Activated CD8-positive, alpha-beta T cell treated with anti-CD3 and anti-CD28 coated beads, Interleukin-2, amount 10 ng/mL, durations not matched to agents 7 days and 5 days (primary cell): ENCODE measurements at regions of chr5 and their contacts with region 1.

Region 1: GRCh38 chr5:102681407-102681983 is 73.6 kb upstream of the PAM start:
- DNase-seq: peak; percentile 70
- ATAC-seq: peak; percentile 76
- H3K4me3 Mint-ChIP-seq: no peak overlapping the region
- H3K27ac Mint-ChIP-seq: no peak overlapping the region
- H3K4me1 Mint-ChIP-seq: no peaks in the 10 kb centered on the region
- H3K27me3 Mint-ChIP-seq: peaks cover 7% of the 10 kb centered on the region

Region 2: GRCh38 chr5:102638912-102639652 is 42.4 kb before region 1 on chr5:
- CTCF ChIA-PET with region 1: no interaction called
- POLR2A ChIA-PET with region 1: no interaction called
- DNase-seq: no peak
- ATAC-seq: no peak
- H3K4me3 Mint-ChIP-seq: no peak overlapping the region
- H3K27ac Mint-ChIP-seq: no peak overlapping the region
- H3K4me1 Mint-ChIP-seq: no peaks in the 10 kb centered on the region
- H3K27me3 Mint-ChIP-seq: no peaks in the 10 kb centered on the region

Region 3: GRCh38 chr5:102700120-102700831 is 18.8 kb after region 1 on chr5:
- CTCF ChIA-PET with region 1: interaction called, 10 read pairs
- POLR2A ChIA-PET with region 1: no interaction called
- DNase-seq: no peak
- ATAC-seq: no peak
- H3K4me3 Mint-ChIP-seq: no peak overlapping the region
- H3K27ac Mint-ChIP-seq: no peak overlapping the region
- H3K4me1 Mint-ChIP-seq: no peaks in the 10 kb centered on the region
- H3K27me3 Mint-ChIP-seq: no peaks in the 10 kb centered on the region

Region 4: GRCh38 chr5:102971697-102972293 is 290.3 kb after region 1 on chr5:
- CTCF ChIA-PET with region 1: interaction called, 20 read pairs
- POLR2A ChIA-PET with region 1: no interaction called
- DNase-seq: no peak
- ATAC-seq: peak; percentile 44
- H3K4me3 Mint-ChIP-seq: no peak overlapping the region
- H3K27ac Mint-ChIP-seq: no peak overlapping the region
- H3K4me1 Mint-ChIP-seq: peaks cover 3% of the 10 kb centered on the region
- H3K27me3 Mint-ChIP-seq: no peaks in the 10 kb centered on the region

Region 5: GRCh38 chr5:103041071-103041676 is 359.7 kb after region 1 on chr5:
- CTCF ChIA-PET with region 1: interaction called, 13 read pairs
- POLR2A ChIA-PET with region 1: no interaction called
- DNase-seq: no peak
- ATAC-seq: no peak
- H3K4me3 Mint-ChIP-seq: no peak overlapping the region
- H3K27ac Mint-ChIP-seq: no peak overlapping the region
- H3K4me1 Mint-ChIP-seq: no peaks in the 10 kb centered on the region
- H3K27me3 Mint-ChIP-seq: peaks cover 15% of the 10 kb centered on the region

Region 6: DNA sequence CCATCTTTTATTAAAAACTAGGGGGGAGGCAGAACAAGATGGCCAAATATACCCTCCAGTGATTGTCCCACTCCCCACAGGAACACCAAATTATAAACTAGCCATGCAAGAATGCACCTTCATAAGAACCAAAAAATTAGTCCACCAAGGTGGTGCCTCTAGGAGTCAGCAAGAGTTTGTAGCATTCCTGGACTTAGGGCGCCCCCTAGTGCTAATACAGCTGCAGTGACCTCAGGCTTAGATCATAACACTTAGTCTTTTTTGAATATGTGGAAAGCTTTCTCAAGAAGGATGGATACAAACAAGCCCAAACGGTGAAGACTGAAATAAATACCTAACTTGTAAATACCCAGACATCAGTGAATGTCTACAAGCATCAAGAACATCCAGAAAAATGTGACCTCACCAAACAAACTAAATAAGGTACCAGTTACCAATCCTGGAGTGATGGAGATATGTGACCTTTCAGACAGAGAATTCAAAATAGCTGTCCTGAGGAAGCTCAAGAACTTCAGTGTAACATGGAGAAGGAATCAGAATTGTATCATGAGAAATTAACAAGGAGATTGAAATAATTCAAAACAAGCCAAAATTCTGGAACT is 457.9 kb after region 1 on chr5:
- CTCF ChIA-PET with region 1: interaction called, 18 read pairs
- POLR2A ChIA-PET with region 1: no interaction called
- DNase-seq: peak; percentile 88
- ATAC-seq: peak; percentile 93
- H3K4me3 Mint-ChIP-seq: no peak overlapping the region
- H3K27ac Mint-ChIP-seq: no peak overlapping the region
- H3K4me1 Mint-ChIP-seq: no peaks in the 10 kb centered on the region
- H3K27me3 Mint-ChIP-seq: no peaks in the 10 kb centered on the region

Region 7: GRCh38 chr5:103224118-103224893 is 542.8 kb after region 1 on chr5:
- CTCF ChIA-PET with region 1: interaction called, 10 read pairs
- POLR2A ChIA-PET with region 1: no interaction called
- DNase-seq: peak; percentile 78
- ATAC-seq: peak; percentile 94
- H3K4me3 Mint-ChIP-seq: no peak overlapping the region
- H3K27ac Mint-ChIP-seq: peak overlapping the region; percentile 23
- H3K4me1 Mint-ChIP-seq: peaks cover 10% of the 10 kb centered on the region
- H3K27me3 Mint-ChIP-seq: peaks cover 28% of the 10 kb centered on the region